ENCODE measurements at regions of chr1 and their contacts with region 1.

Region 1: DNA sequence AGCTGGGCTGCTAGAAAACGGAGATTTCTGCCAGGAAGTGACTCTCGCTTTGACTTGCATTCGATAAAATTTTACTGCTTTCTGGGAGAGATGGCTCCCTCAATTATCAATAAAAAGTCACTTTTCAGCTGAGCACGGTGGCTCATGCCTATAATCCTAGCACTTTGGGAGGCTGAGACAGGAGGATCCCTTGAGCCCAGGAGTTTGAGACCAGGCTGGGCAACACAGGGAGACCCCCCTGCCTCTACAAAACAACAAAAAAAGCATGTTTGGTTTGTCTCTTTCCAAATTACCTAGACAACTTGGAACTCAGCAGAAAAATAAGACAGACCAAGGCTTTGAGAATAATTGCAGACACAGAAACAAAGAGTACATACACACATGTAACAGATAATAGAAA is 12.9 kb upstream of the ENSA start:
- DNase-seq: no peak
- H3K4me3 ChIP-seq: no peak overlapping the region
- H3K27ac ChIP-seq: no peak overlapping the region
- H3K27me3 ChIP-seq: no peaks in the 10 kb centered on the region
- CTCF ChIP-seq: no peak

Region 2: DNA sequence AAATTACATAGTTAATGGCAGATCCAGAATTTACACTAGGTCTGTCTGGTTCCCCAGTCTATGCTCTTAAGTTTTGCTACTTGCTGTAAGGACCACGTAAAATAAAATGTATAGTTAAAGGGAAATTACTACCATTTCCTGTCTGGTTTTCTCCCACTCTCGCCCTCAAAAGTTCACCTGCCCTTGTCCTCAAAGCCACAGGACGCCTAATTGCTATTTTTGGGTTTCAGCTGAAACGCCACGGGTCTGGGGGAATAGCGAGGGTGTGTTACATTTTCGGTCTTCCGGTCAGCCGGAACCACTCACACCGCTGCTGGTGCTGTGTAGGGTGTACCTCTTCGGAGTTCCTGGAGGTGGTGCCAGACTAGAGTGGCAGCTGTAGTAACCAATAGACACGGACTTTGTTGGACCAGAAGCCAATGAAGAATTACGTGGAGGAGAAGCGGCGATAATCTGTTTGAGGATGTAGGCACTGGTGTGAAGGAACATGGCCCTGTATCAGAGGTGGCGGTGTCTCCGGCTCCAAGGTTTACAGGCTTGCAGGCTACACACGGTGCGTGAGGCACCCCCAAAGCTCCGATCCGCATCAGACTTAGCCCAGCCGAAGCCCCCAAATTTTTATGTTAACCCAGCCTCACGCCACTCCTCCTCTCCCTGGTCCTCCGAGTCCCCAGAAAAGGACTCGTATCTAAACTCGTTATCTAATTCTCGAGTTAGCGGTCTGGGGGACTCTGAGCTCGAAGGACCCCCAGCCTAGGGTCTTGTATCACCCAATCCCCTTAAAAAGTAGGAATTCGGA is 155.1 kb before region 1 on chr1 and contains the start of gene TARS2:
- CTCF ChIA-PET with region 1: no interaction called
- POLR2A ChIA-PET with region 1: interaction called, 14 read pairs
- DNase-seq: peak; percentile 98
- H3K4me3 ChIP-seq: peak within 1 kb of the TSS; percentile 96
- H3K27ac ChIP-seq: peak within 1 kb of the TSS; percentile 53
- H3K27me3 ChIP-seq: no peaks in the 10 kb centered on the region
- CTCF ChIP-seq: peak; percentile 23; the same call in 1 of the 2 replicates
- polyA plus RNA-seq, gene TARS2: 14.5 and 14.6 TPM in 2 replicates

Region 3: GRCh38 chr1:150660584-150660983 is 18.3 kb after region 1 on chr1:
- CTCF ChIA-PET with region 1: no interaction called
- POLR2A ChIA-PET with region 1: no interaction called
- DNase-seq: no peak
- H3K4me3 ChIP-seq: no peak overlapping the region
- H3K27ac ChIP-seq: no peak overlapping the region
- H3K27me3 ChIP-seq: no peaks in the 10 kb centered on the region
- CTCF ChIP-seq: no peak

Region 4: DNA sequence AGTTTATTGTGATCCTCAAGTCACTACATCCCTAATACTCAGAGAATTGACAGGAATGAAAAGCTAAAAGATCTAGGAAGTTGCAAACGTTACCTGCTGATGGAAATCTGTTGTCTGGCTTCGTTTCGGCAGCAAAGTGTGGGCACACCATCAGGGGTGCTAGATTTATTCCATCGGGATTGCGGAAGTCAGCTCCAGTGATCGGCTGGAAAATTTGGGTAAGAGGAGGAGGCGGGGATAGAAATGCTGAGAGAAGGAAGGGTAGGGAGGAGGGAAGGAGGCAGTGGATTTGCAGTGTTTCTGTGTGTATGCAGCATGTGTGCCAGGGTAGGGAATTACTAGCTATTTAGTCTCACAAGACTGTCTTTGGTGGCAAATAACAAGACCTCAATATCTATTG is 165.8 kb after region 1 on chr1 and contains the start of gene CTSK:
- CTCF ChIA-PET with region 1: interaction called, 3 read pairs
- POLR2A ChIA-PET with region 1: interaction called, 11 read pairs
- DNase-seq: no peak
- H3K4me3 ChIP-seq: peak within 1 kb of the TSS; percentile 29
- H3K27ac ChIP-seq: no peak within 1 kb of the TSS
- H3K27me3 ChIP-seq: no peaks in the 10 kb centered on the region
- CTCF ChIP-seq: no peak
- polyA plus RNA-seq, gene CTSK: 65.4 and 72.5 TPM in 2 replicates